MCF 10A (cell line): ENCODE measurements at regions of chr15 and their contacts with region 1.

Region 1: DNA sequence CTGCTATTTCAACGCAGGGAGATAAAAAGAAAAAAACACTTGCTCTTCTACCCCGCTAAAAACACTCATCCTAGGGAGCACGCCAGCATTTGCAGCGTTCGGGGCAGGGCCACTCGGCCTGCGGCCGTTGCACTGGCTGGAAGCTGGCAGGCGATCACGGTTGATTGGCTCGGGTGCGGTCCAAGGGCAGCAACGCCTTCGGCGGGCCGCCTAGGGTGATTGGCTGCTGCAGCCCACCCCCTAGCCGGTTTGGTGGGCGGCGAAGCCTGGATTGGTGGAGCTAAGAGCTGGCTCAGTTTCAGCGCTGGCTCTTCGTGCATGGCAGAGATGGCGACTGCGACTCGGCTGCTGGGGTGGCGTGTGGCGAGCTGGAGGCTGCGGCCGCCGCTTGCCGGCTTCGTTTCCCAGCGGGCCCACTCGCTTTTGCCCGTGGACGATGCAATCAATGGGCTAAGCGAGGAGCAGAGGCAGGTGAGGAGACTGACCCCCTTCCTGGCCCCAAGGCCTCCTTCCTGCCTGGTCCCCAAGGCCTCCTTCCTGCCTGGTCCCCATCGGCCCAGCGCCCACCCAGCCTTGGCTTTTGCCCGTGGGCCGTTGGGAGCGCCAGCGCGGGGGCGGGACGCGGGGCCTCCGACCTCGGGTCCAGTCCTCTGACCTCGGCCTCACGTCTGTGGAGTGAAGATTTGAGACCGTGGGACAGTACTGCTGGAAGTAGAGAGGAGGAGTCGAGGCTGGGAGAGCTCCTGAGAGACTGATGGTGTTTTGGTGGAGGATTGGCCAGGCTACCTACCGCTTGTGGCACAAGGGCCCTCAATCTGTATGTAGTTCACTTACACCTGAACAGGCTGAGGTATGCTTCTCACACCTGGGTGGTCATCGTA is at the start of gene IVD:
- DNase-seq: peak; percentile 94
- H3K4me3 Mint-ChIP-seq: peak within 1 kb of the TSS; percentile 83
- H3K27ac Mint-ChIP-seq: peak within 1 kb of the TSS; percentile 64
- H3K4me1 Mint-ChIP-seq: peaks cover 6% of the 10 kb centered on the region
- H3K27me3 Mint-ChIP-seq: no peaks in the 10 kb centered on the region
- CTCF ChIP-seq: no peak
- total RNA-seq, gene IVD: 53.8 and 61.6 TPM in 2 replicates

Region 2: DNA sequence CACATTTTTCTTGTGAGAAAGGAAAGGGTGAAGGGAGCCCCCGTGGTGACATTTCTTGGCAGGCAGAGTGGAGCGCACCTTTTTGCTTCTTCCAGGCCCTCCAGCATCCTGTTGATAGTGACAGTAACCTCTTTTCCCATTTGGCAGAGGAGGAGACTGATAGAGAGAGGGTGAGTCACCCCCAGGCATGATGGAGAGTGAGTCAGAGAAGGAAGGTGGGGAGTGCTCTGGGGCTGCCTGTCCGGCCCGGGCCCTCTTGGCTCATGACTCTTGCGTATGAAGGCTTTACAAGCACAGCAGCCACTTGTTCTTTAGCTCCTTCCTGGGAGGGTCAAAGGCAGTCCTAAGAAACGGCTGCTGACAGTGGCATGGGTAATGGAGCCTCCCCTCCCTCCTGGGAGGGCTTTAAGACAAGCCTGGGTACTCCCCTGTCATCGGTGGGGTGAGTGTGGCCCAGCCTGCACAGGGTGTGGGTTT is 138.9 kb before region 1 on chr15:
- CTCF ChIA-PET with region 1: no interaction called
- POLR2A ChIA-PET with region 1: no interaction called
- intact Hi-C with region 1: no loop called
- DNase-seq: peak; percentile 96
- H3K4me3 Mint-ChIP-seq: no peak overlapping the region
- H3K27ac Mint-ChIP-seq: peak overlapping the region; percentile 20
- H3K4me1 Mint-ChIP-seq: peaks cover 7% of the 10 kb centered on the region
- H3K27me3 Mint-ChIP-seq: no peaks in the 10 kb centered on the region
- CTCF ChIP-seq: no peak

Region 3: GRCh38 chr15:40382580-40383456 is 22.9 kb before region 1 on chr15 and contains the start of gene KNSTRN:
- CTCF ChIA-PET with region 1: no interaction called
- POLR2A ChIA-PET with region 1: interaction called, 38 read pairs
- intact Hi-C with region 1: no loop called
- DNase-seq: peak; percentile 95
- H3K4me3 Mint-ChIP-seq: peak within 1 kb of the TSS; percentile 97
- H3K27ac Mint-ChIP-seq: peak within 1 kb of the TSS; percentile 89
- H3K4me1 Mint-ChIP-seq: peaks cover 25% of the 10 kb centered on the region
- H3K27me3 Mint-ChIP-seq: no peaks in the 10 kb centered on the region
- CTCF ChIP-seq: no peak
- total RNA-seq, gene KNSTRN: 35.2 and 47.4 TPM in 2 replicates

Region 4: GRCh38 chr15:40388946-40389841 is 16.5 kb before region 1 on chr15:
- CTCF ChIA-PET with region 1: interaction called, 5 read pairs
- POLR2A ChIA-PET with region 1: interaction called, 38 read pairs
- intact Hi-C with region 1: no loop called
- DNase-seq: peak; percentile 96
- H3K4me3 Mint-ChIP-seq: no peak overlapping the region
- H3K27ac Mint-ChIP-seq: peak overlapping the region; percentile 49
- H3K4me1 Mint-ChIP-seq: peaks cover 21% of the 10 kb centered on the region
- H3K27me3 Mint-ChIP-seq: no peaks in the 10 kb centered on the region
- CTCF ChIP-seq: no peak